ENCODE measurements at regions of chr16 and their contacts with region 1.

Region 1: GRCh38 chr16:11639925-11640899 is 28.0 kb upstream of the SNN start:
- DNase-seq: peak; percentile 80 to 94 (median 85)
- ATAC-seq: peak; percentile 91 to 96 (median 94)
- H3K4me3 ChIP-seq: no peak overlapping the region
- H3K27ac ChIP-seq: peak overlapping the region; percentile 69 to 95 (median 88)
- H3K4me1 ChIP-seq: peaks cover 0 to 22% (median 14%) of the 10 kb centered on the region in 12 donors
- H3K27me3 ChIP-seq: no peaks in the 10 kb centered on the region
- CTCF ChIP-seq: no peak
- POLR2A ChIP-seq: peak in 1 of 2 donors; percentile 36

Region 2: DNA sequence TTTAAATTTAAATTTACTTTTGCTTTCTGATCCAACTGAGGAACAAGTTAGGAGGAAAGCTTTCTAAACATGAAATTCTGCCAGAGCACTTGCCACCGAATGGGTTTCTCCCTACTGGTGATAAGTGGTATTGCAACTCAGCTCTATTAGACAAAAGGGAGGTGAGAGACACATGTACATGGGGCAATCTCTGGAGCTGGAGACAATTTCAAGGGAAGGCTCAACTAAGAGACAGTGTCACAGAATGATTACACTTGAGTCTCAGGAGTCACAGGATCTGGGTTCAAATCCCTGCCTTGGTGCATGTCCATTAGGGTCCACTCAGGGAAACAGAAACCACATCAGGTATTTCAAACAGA is 421.6 kb before region 1 on chr16:
- intact Hi-C with region 1: no loop called
- DNase-seq: no peak
- ATAC-seq: no peak
- H3K4me3 ChIP-seq: no peak overlapping the region
- H3K27ac ChIP-seq: no peak overlapping the region
- H3K4me1 ChIP-seq: peaks cover 0 to 15% (median 0%) of the 10 kb centered on the region in 12 donors
- H3K27me3 ChIP-seq: no peaks in the 10 kb centered on the region
- CTCF ChIP-seq: peak in 10 of 12 donors; percentile 7 to 55 (median 29)
- POLR2A ChIP-seq: no peak

Region 3: DNA sequence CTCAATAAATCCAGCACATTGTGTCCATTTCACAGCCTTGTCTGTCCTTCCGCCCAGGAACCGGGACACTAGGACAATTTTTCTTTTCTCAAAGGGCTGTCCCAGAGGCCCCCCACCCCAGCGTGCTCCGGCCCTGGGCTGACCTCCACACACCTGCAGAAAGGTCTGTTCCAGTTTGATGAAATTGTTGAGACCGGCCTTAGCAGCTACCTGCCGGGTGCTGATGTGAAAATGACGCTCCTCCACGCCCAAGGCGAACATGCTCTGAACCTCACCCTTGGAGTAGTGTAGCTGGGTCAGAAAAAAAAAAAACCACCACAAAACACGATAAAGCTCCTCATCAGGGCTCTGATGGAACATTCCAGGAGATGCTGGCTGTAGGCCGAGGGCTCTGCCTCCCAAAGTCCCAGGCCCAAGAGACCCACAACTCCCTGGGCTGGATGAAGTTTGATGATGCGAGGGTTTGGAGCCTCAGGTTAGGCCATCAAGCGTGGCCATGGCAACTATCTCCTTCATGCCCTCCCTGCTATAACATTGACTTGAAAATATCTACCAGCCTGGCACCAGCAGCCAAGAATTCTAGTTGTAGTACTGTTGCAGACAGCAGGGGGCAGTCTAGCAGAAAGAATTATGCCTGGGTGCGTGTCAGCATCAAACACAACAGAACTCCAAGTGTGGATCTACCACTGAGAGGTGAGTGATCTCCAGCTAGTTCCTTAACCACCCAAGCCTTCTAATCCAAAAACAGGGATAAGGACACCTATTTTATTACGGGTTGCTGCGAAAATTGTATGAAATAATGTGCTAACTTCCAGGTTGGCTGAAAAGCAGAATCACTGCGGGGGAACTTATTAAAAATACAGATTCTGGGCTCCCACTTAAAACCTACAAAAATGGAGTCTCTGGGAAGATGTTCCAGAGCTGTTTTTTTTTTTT is 232.9 kb before region 1 on chr16:
- intact Hi-C with region 1: loop called in 9 of 10 experiments (anchors 2 to 5 kb)
- DNase-seq: peak; percentile 20 to 71 (median 38)
- ATAC-seq: peak in 3 of 4 donors; percentile 49 to 78 (median 55)
- H3K4me3 ChIP-seq: no peak overlapping the region
- H3K27ac ChIP-seq: no peak overlapping the region
- H3K4me1 ChIP-seq: peaks cover 0 to 6% (median 0%) of the 10 kb centered on the region in 12 donors
- H3K27me3 ChIP-seq: no peaks in the 10 kb centered on the region
- CTCF ChIP-seq: peak; percentile 48 to 79 (median 61)
- POLR2A ChIP-seq: no peak

Region 4: GRCh38 chr16:11526655-11527350 is 113.4 kb before region 1 on chr16:
- intact Hi-C with region 1: loop called (anchors 2 to 10 kb)
- DNase-seq: no peak
- ATAC-seq: no peak
- H3K4me3 ChIP-seq: no peak overlapping the region
- H3K27ac ChIP-seq: no peak overlapping the region
- H3K4me1 ChIP-seq: peaks cover 0 to 6% (median 0%) of the 10 kb centered on the region in 12 donors
- H3K27me3 ChIP-seq: peaks cover 0 to 12% (median 2%) of the 10 kb centered on the region in 9 donors
- CTCF ChIP-seq: no peak
- POLR2A ChIP-seq: no peak

Region 5: GRCh38 chr16:11586856-11587642 is 53.2 kb before region 1 on chr16 and contains the start of gene LITAF:
- intact Hi-C with region 1: loop called in 5 of 10 experiments (anchors 2 to 10 kb)
- DNase-seq: peak; percentile 73 to 87 (median 77)
- ATAC-seq: peak; percentile 28 to 90 (median 82)
- H3K4me3 ChIP-seq: peak within 1 kb of the TSS; percentile 58 to 98 (median 84)
- H3K27ac ChIP-seq: peak within 1 kb of the TSS; percentile 81 to 98 (median 92)
- H3K4me1 ChIP-seq: peaks cover 0 to 52% (median 19%) of the 10 kb centered on the region in 12 donors
- H3K27me3 ChIP-seq: no peaks in the 10 kb centered on the region
- CTCF ChIP-seq: peak in 3 of 12 donors; percentile 5 to 15 (median 7)
- POLR2A ChIP-seq: peak in 1 of 2 donors; percentile 73
- total RNA-seq, gene LITAF: 34.1 to 133 (median 54.0) TPM

Region 6: DNA sequence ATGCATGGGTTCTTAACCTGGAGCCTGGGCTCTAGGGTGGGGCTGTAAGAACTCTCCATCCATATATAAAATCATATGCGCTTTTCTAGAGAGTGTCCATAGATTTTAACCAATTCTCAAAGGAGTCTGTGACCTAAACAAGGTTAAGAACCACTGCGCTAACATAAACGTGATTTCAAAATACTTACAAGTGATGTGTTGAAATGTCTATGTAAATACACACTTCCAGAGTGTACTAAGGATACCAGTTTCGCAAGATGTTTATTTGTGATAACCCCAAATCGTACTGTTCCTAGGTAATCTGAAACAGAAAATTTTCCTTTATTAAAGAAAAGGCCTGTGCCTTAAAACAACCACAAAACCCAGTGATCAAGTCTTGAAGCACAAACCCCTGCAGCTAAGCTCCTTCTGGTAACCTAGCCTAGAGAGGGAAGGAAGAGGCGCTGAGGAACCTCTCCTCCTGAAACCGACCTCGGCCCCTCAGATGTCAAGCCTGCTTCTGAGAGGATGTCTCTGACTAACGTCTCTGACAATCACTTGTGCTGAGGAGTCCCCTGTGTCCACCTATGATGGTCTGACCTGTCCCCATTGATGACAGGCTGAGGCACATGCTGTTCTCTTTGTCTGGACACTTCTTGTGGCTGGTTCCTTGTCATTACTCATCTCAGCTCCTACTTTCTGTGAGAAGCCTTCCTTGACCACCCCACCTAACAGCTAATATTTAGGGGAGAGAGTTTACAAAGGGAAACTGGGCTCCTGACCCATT is 60.2 kb after region 1 on chr16:
- intact Hi-C with region 1: no loop called
- DNase-seq: no peak
- ATAC-seq: no peak
- H3K4me3 ChIP-seq: no peak overlapping the region
- H3K27ac ChIP-seq: peak overlapping the region in 1 of 12 donors; percentile 16
- H3K4me1 ChIP-seq: peaks cover 0 to 24% (median 5%) of the 10 kb centered on the region in 12 donors
- H3K27me3 ChIP-seq: no peaks in the 10 kb centered on the region
- CTCF ChIP-seq: no peak
- POLR2A ChIP-seq: no peak

Region 7: GRCh38 chr16:11715246-11715947 is 75.2 kb after region 1 on chr16:
- intact Hi-C with region 1: loop called in 2 of 10 experiments (anchors 5 to 10 kb)
- DNase-seq: no peak
- ATAC-seq: no peak
- H3K4me3 ChIP-seq: no peak overlapping the region
- H3K27ac ChIP-seq: peak overlapping the region in 1 of 12 donors; percentile 9
- H3K4me1 ChIP-seq: peaks cover 0 to 12% (median under 1%) of the 10 kb centered on the region in 12 donors
- H3K27me3 ChIP-seq: no peaks in the 10 kb centered on the region
- CTCF ChIP-seq: no peak
- POLR2A ChIP-seq: no peak